ENCODE measurements at regions of chr12 and their contacts with region 1.

Region 1: DNA sequence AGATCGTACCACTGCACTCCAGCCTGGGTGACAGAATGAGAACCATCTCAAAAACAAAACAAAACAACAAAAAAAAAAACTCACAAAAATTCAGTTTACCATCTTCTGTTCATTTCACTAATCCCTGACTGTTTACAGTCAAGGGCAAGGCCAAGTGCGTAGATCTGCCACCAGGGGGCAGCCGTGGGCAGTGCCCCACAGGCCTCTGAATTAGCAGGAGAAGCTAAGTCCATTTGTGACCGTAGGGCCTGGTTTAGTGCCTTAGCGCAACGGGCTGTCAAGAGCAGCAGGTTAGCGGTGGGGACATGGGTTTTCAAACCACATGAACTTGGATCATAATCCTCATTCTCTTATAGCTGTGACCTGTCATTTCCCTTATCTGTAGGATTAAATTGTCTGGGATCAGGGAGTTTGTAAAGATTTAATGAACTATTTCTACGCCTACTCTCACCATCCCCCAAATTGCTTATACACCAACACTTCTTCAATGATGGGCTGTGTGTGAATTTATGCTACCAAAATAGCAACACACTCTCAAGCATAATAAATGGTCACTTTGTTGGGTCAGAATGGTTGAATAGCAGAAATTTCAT is 49.0 kb downstream of the KCTD10 start:
- DNase-seq: peak; percentile 83
- H3K4me3 ChIP-seq: no peak overlapping the region
- H3K27ac ChIP-seq: no peak overlapping the region
- H3K4me1 ChIP-seq: peaks cover 4% of the 10 kb centered on the region
- H3K27me3 ChIP-seq: no peaks in the 10 kb centered on the region
- CTCF ChIP-seq: peak; percentile 95 to 97
- POLR2A ChIP-seq: no peak

Region 2: DNA sequence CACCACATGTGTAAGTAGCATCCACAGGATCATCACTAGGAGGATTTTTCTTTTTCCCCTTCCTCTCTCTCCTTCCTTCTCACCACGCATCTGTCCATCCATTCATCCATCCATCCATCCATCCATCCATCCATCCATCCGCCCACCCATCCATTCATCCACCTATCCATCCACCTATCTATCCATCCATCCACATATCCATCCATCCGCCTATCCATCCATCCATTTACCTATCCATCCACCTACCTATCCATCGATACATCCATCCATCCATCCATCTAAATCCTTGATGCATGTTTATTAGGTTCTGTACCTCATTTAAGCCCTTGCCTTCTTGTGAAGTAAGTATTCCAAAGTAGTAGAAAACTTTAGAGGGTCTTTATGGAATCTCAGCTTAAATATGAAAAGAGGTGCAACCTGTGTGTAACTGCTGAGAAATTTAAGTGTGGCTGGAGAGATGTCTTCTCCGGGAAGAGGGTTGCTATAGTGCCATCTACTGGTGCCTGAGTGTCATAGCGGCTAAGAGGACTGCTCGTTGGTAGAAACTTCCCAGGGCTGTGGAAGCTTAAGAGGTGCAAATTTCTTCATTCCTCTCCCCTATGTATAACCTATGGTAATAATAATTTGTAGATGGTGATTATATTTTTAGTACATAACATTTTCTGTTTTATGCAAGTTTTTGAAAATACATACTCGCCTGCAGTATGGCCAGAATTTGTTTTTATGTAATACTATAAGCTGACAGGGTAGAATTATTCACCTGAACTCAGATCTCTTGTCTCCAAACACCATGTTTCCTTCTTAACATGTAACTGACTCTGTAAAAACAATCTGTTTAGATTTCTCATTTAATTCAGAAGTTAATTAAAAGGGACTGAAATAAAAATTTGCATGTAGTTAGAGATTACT is 34.4 kb before region 1 on chr12:
- CTCF ChIA-PET with region 1: interaction called, 10 read pairs
- POLR2A ChIA-PET with region 1: no interaction called
- dilution Hi-C with region 1: no loop called
- intact Hi-C with region 1: no loop called
- DNase-seq: peak; percentile 63
- H3K4me3 ChIP-seq: no peak overlapping the region
- H3K27ac ChIP-seq: no peak overlapping the region
- H3K4me1 ChIP-seq: no peaks in the 10 kb centered on the region
- H3K27me3 ChIP-seq: no peaks in the 10 kb centered on the region
- CTCF ChIP-seq: peak; percentile 86 to 91
- POLR2A ChIP-seq: no peak

Region 3: DNA sequence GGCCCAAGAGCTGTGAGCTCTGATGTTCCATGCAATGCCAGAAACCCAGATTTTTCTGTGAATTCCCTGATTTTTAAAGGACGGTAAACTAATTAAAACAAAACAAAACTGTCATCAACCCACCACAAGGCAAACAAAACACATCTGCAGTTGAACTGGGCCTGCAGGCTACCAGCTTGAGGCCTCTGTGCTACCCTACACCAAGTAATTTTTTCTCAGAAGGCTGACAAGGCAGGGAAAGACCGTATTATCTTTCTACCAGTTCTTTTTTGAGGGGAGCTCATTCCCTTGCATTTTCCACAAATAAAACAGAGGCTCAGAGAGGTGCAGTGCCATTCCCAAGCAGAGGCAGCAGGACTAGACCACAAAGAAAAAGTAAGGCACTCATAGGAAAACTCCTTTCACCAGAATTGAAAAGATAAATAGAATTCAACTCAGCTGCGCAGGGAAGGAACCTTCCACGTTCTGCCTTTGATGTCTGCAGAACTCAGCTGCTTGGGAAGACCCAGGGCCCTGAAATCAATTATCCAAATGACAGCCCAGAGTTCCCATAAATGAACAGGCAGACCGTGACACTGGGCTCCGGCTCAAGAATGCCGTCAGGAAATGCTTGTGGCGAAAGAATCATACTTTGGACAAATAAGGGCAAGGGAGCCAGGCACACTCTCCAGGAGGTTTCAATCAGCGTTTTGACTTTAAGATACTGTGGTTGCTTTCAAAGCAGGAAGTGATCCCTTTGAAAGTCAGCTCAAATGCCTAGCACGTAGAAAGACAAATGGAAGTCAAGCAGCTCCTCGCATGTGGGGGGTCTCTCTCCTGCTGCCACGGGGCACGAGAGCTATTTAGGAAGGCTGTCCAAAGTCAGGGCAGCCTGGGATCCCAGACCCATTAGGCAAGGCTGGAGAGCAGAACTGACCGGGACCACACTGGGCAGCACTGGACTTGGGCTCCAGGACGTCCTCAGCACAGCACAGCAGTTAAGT is 34.9 kb after region 1 on chr12:
- CTCF ChIA-PET with region 1: interaction called, 47 read pairs
- POLR2A ChIA-PET with region 1: no interaction called
- dilution Hi-C with region 1: no loop called
- intact Hi-C with region 1: loop called (anchors 1 kb)
- DNase-seq: peak; percentile 92
- H3K4me3 ChIP-seq: no peak overlapping the region
- H3K27ac ChIP-seq: peak overlapping the region; percentile 89
- H3K4me1 ChIP-seq: peaks cover 71% of the 10 kb centered on the region
- H3K27me3 ChIP-seq: no peaks in the 10 kb centered on the region
- CTCF ChIP-seq: no peak
- POLR2A ChIP-seq: peak; percentile 23

Region 4: DNA sequence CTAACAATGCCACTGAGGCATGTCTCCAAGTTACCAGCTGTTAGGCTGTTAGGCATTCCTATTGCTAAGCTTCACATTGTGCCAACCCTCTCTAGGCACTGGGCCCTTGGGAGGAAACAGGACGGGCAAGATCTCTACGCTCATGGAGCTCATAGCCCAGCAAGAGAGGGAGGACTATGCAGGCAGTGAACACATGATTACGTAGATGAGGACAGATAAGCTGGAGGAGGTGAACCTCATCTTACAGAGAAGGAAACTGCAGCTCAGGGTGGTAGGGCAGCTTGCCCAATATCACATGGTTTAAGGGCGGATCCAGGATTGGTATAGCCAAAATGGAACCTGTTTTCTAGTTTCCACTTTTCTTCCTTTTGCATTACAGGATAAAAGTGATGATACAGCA is 57.1 kb after region 1 on chr12:
- CTCF ChIA-PET with region 1: interaction called, 58 read pairs
- POLR2A ChIA-PET with region 1: no interaction called
- dilution Hi-C with region 1: no loop called
- intact Hi-C with region 1: no loop called
- DNase-seq: no peak
- H3K4me3 ChIP-seq: no peak overlapping the region
- H3K27ac ChIP-seq: no peak overlapping the region
- H3K4me1 ChIP-seq: no peaks in the 10 kb centered on the region
- H3K27me3 ChIP-seq: no peaks in the 10 kb centered on the region
- CTCF ChIP-seq: no peak
- POLR2A ChIP-seq: no peak

Region 5: DNA sequence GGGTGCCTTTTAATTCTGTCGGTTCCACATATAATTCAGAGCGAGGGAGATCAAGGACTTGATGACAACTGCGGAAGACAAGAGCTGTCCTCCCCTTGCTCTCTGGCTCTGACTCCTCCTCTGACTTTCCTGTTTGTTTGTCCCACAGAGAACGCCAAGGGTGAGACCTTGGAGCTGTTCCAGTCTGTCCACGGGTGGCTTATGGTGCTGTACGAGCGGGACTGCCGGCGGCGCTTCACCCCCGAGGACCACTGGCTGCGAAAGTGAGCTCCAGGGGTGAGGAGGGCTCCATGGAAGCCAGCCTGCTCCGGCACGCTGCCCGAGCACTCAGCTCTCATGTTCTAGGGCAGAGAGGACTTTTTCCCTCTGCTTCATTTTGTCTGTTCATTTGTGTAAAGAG is 82.1 kb after region 1 on chr12:
- CTCF ChIA-PET with region 1: interaction called, 10 read pairs
- POLR2A ChIA-PET with region 1: no interaction called
- dilution Hi-C with region 1: no loop called
- intact Hi-C with region 1: no loop called
- DNase-seq: no peak
- H3K4me3 ChIP-seq: no peak overlapping the region
- H3K27ac ChIP-seq: no peak overlapping the region
- H3K4me1 ChIP-seq: no peaks in the 10 kb centered on the region
- H3K27me3 ChIP-seq: no peaks in the 10 kb centered on the region
- CTCF ChIP-seq: no peak
- POLR2A ChIP-seq: no peak

Region 6: GRCh38 chr12:109597795-109598427 is 169.8 kb after region 1 on chr12:
- CTCF ChIA-PET with region 1: interaction called, 8 read pairs
- POLR2A ChIA-PET with region 1: no interaction called
- dilution Hi-C with region 1: no loop called
- intact Hi-C with region 1: loop called (anchors 5 kb)
- DNase-seq: peak; percentile 78
- H3K4me3 ChIP-seq: no peak overlapping the region
- H3K27ac ChIP-seq: no peak overlapping the region
- H3K4me1 ChIP-seq: peaks cover 3% of the 10 kb centered on the region
- H3K27me3 ChIP-seq: no peaks in the 10 kb centered on the region
- CTCF ChIP-seq: peak; percentile 95 to 100
- POLR2A ChIP-seq: no peak